MCF 10A (cell line): ENCODE measurements at regions of chr11 and their contacts with region 1.

Region 1: DNA sequence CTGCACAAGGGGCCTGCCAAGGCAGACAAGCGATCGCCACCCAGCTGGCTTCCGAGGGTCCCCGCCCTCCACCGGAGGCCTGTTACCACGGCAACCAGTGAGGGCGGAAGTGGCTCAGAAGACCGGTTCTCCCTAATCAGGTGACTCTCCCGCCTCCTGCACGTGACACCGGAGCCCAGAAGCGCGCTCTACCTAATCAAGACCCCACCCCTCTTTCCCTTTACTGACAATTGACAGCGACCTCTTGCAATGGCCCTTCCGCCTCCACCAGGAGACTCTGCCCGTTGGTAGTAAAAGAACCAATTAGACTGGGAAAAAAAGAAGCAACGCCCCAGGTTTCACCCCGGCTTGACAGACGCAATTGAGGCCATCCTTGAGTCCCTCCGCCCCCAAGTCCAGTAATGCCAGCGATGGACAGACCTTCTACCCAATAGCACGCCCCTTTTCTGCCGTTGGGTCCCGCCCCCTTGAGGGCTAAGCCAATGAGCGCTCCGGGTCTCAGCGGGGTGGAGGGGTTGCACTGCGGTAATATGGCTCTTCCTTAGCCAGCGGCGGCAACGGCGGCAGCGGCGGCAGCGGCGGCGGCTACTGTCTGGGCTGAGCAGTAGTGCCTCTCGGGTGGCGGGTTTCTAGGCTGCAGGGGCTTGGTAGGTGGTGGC is at the start of gene UVRAG:
- DNase-seq: peak; percentile 100
- H3K4me3 Mint-ChIP-seq: no peak within 1 kb of the TSS
- H3K27ac Mint-ChIP-seq: no peak within 1 kb of the TSS
- H3K4me1 Mint-ChIP-seq: peaks cover 11% of the 10 kb centered on the region
- H3K27me3 Mint-ChIP-seq: no peaks in the 10 kb centered on the region
- CTCF ChIP-seq: no peak
- total RNA-seq, gene UVRAG: 12.4 and 16.1 TPM in 2 replicates

Region 2: DNA sequence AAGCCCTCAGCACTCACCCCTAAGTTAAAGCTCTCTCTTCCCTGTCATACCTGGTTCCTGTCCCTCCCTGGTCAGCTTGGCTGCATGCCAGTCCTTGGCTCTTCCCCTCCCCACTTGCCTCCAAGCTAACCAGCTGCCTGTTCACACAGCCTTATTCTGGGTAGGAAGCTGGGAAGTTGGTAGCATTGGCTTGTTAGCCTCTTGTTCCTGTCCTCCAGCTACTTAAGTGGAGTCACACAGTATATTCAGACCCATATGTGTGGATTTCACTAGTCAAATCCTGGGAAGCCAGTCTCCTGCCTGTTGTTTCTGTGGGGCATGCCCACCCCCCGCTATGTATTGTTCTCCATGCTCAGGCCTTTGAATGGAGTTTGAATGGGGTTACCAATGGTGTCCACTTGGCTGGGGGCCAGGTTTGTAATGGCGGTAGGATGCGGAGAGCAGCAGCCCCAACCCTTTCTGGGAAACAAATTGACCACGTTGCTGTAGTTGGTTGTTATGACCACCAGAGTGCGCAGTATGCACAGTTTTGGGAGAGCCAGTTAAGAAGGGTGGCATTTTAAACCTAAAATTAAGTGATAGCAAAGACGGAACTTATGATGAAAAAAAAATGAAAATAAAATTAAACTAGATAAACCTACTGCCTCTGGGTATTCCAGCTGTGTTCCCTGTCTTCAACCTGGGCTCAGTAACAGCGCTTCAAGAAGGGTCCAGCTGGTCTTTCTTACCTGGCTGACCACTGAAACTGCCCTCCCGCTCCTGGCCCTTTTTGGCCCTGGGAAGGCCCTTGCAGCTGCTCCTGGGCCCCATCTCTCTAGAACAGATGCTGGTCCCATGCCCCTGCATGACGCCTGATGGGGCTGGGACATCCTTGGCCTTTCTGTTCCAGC is 426.2 kb before region 1 on chr11:
- CTCF ChIA-PET with region 1: no interaction called
- POLR2A ChIA-PET with region 1: no interaction called
- intact Hi-C with region 1: no loop called
- DNase-seq: peak; percentile 86
- H3K4me3 Mint-ChIP-seq: no peak overlapping the region
- H3K27ac Mint-ChIP-seq: no peak overlapping the region
- H3K4me1 Mint-ChIP-seq: peaks cover 5% of the 10 kb centered on the region
- H3K27me3 Mint-ChIP-seq: no peaks in the 10 kb centered on the region
- CTCF ChIP-seq: peak; percentile 67

Region 3: DNA sequence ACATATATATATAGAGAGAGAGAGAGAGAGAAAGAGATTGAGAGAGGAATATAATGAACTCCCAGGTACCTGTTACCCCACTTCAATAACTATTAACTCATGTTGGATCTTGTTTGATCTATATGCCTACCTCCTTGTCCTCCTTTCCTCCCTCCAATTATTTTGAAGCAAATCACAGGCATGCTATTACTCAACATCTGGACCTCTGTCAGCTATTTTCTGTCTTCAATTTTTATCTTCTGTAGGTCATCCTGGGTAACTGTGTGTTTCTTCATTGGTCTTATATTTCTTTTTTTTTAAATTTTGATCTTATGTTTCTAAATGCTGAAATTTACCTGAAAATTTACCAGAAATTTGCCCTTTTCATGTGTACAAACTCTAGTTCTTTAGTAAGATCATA is 25.0 kb after region 1 on chr11:
- CTCF ChIA-PET with region 1: no interaction called
- POLR2A ChIA-PET with region 1: interaction called, 18 read pairs
- intact Hi-C with region 1: no loop called
- DNase-seq: no peak
- H3K4me3 Mint-ChIP-seq: no peak overlapping the region
- H3K27ac Mint-ChIP-seq: no peak overlapping the region
- H3K4me1 Mint-ChIP-seq: peaks cover 22% of the 10 kb centered on the region
- H3K27me3 Mint-ChIP-seq: no peaks in the 10 kb centered on the region
- CTCF ChIP-seq: no peak

Region 4: DNA sequence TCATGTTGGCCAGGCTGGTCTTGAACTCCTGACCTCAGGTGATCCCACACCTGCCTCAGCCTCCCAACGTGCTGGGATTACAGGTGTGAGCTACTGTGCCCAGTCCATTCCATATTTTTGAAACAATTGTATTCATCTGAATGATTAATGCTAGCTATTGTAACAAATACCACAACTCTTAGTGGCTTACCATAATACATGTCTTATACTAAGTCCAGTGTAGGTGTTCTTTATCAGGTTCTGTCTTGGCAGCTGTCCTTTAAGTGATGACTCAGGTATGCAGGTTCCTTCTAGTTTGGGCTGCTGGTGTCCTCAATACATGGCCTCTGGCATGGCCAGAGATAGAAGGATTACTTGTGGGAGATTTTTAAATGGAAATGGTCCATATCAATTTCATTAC is 39.2 kb after region 1 on chr11:
- CTCF ChIA-PET with region 1: interaction called, 7 read pairs
- POLR2A ChIA-PET with region 1: interaction called, 11 read pairs
- intact Hi-C with region 1: no loop called
- DNase-seq: peak; percentile 78
- H3K4me3 Mint-ChIP-seq: no peak overlapping the region
- H3K27ac Mint-ChIP-seq: no peak overlapping the region
- H3K4me1 Mint-ChIP-seq: peaks cover 20% of the 10 kb centered on the region
- H3K27me3 Mint-ChIP-seq: no peaks in the 10 kb centered on the region
- CTCF ChIP-seq: no peak